HEK293T (cell line): ENCODE measurements at regions of chr7 and their contacts with region 1.

Region 1: DNA sequence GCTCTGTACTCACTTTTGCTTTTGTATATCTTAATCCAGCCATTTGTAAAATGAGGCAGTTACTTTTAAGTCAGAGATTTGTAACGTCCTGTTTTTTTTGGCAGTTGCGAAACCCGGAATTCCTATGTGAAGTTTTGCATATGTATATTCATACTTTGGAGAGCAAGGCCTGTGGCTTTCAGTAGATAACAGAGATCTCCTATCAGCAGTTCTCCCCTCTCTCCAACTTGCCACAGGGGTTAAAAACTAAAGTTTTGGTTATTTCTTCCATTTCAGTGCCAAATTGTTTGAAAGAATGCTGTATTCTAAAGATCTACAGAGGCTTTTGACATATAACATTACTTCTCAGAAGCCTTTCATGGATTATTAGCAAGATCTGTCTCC is 102.4 kb downstream of the EXOC4 start:
- DNase-seq: no peak

Region 2: GRCh38 chr7:133386205-133386604 is 30.9 kb after region 1 on chr7:
- CTCF ChIA-PET with region 1: interaction called, 10 read pairs
- POLR2A ChIA-PET with region 1: no interaction called
- DNase-seq: no peak

Region 3: GRCh38 chr7:133504825-133505224 is 149.5 kb after region 1 on chr7:
- CTCF ChIA-PET with region 1: no interaction called
- POLR2A ChIA-PET with region 1: no interaction called
- DNase-seq: no peak